ENCODE measurements at regions of chr1 and their contacts with region 1.

Region 1: GRCh38 chr1:179129702-179130473 is 48.0 kb downstream of the TOR3A start:
- DNase-seq: peak; percentile 31
- ATAC-seq: peak; percentile 97
- H3K4me3 Mint-ChIP-seq: peak overlapping the region; percentile 61
- H3K27ac Mint-ChIP-seq: peak overlapping the region; percentile 92
- H3K4me1 Mint-ChIP-seq: peaks cover 39% of the 10 kb centered on the region
- H3K27me3 Mint-ChIP-seq: no peaks in the 10 kb centered on the region

Region 2: DNA sequence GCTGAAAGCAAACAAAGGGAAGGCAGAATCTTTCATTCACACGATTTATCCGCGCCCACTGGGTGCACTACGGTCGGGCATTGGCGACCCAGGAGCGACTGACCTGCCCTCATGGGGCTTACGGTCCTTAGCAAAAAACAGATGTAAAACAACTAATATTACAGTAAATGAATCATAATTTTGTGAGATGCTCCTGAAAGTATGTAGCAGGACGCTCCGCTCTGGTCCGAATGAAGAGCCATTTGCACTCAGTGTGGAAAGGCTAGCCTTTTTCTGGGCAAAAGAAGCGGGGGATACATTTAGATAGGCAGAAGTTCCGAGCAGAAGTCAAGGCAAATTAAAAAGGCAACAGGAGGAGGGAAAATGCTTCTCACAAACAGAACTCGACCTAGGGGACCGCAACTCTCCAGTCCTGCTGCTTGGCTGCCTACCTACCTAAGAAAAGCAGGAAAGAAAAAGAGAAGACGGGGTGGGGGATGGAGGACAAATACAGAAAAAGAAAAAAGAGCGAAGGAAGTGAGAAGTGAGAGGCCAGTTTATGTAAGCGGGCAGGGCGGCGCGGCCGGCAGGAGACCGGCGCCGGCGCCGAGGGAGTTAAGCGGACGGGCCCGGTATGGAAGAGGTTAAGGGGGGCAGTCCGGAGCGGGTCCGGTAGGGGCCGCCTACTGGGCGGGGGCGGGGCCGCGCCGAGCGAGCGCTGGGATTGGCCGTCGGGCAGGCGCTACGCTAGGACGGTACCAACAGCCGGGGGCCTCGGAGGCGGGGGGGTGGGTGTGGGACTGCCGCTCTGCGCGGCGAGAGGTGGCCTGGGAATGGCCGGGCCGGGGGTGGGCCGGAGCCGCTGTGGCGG is 104.5 kb before region 1 on chr1 and contains the start of gene FAM20B:
- CTCF ChIA-PET with region 1: no interaction called
- POLR2A ChIA-PET with region 1: no interaction called
- intact Hi-C with region 1: loop called in 1 of 2 experiments (anchors 5 kb)
- DNase-seq: peak; percentile 93
- ATAC-seq: peak; percentile 85
- H3K4me3 Mint-ChIP-seq: peak within 1 kb of the TSS; percentile 87
- H3K27ac Mint-ChIP-seq: peak within 1 kb of the TSS; percentile 87
- H3K4me1 Mint-ChIP-seq: peaks cover 39% of the 10 kb centered on the region
- H3K27me3 Mint-ChIP-seq: no peaks in the 10 kb centered on the region
- total RNA-seq, gene FAM20B: 21.7 to 35.8 TPM

Region 3: GRCh38 chr1:179034720-179035119 is 95.2 kb before region 1 on chr1:
- CTCF ChIA-PET with region 1: no interaction called
- POLR2A ChIA-PET with region 1: no interaction called
- intact Hi-C with region 1: loop called (anchors 1 to 5 kb)
- DNase-seq: no peak
- ATAC-seq: peak; percentile 80
- H3K4me3 Mint-ChIP-seq: no peak overlapping the region
- H3K27ac Mint-ChIP-seq: peak overlapping the region; percentile 84
- H3K4me1 Mint-ChIP-seq: peaks cover 85% of the 10 kb centered on the region
- H3K27me3 Mint-ChIP-seq: no peaks in the 10 kb centered on the region

Region 4: DNA sequence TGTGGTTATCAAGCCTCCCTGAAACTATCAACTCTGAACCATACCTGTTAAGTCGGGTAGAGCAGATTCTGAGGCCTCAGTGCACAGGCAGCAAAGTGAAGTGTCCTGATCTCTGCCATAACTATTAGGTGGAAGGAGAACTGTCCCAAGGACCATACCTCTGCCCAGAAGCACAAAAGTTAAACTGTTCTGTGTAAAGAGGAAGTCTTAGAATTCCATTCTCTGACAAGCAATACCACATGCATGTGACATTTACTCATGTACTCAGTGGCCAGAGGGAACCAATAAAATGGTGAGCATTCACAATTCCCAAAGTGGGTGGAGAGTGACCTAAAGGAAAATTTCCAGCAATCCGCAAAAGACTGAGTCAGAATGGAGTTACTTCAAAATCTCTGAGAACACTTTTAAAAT is 13.0 kb after region 1 on chr1:
- CTCF ChIA-PET with region 1: interaction called, 5 read pairs
- POLR2A ChIA-PET with region 1: no interaction called
- intact Hi-C with region 1: loop called (anchors 1 kb)
- DNase-seq: no peak
- ATAC-seq: no peak
- H3K4me3 Mint-ChIP-seq: peak overlapping the region; percentile 38
- H3K27ac Mint-ChIP-seq: peak overlapping the region; percentile 75
- H3K4me1 Mint-ChIP-seq: peaks cover 40% of the 10 kb centered on the region
- H3K27me3 Mint-ChIP-seq: no peaks in the 10 kb centered on the region

Region 5: DNA sequence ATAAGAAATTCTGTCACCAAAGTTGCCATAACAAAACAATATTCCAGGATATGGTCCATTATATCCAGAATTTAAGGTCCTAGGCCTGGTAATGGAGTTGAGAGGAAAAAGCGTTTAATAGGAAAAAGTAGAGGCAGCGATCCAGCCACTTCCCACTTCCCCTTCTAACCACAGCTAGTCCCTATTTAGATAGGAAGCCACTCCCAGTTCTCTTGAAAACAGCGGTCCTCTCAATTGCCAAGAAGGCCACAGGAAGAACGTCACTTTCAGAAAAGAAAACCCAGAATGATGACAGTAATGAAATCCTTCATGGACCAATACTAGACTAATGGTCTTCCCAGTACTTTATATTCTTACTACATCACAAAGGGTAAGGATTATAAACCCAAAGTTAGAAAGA is 61.0 kb after region 1 on chr1:
- CTCF ChIA-PET with region 1: interaction called, 3 read pairs
- POLR2A ChIA-PET with region 1: no interaction called
- intact Hi-C with region 1: loop called in 1 of 2 experiments (anchors 2 kb)
- DNase-seq: no peak
- ATAC-seq: no peak
- H3K4me3 Mint-ChIP-seq: no peak overlapping the region
- H3K27ac Mint-ChIP-seq: peak overlapping the region; percentile 11
- H3K4me1 Mint-ChIP-seq: peaks cover 18% of the 10 kb centered on the region
- H3K27me3 Mint-ChIP-seq: no peaks in the 10 kb centered on the region

Region 6: DNA sequence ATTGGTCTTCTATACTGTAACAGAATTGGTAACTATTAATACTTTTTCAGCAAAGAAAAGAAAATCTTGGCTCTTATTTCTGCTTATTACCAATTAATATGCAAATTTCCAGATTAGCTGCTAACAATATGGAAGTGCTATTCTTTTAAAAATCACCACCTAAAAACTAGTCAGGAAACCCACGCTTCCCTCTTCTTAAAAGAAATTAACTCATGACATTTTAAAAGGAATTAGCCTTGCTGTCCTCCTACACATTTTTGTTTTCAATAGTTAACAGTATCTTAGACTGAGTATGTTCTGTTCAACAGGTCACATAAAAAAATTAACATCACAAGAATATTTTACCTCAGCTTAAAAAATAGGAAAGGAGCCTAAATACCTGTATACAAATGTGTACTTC is 72.3 kb after region 1 on chr1:
- CTCF ChIA-PET with region 1: no interaction called
- POLR2A ChIA-PET with region 1: no interaction called
- intact Hi-C with region 1: no loop called
- DNase-seq: no peak
- ATAC-seq: no peak
- H3K4me3 Mint-ChIP-seq: no peak overlapping the region
- H3K27ac Mint-ChIP-seq: no peak overlapping the region
- H3K4me1 Mint-ChIP-seq: peaks cover 33% of the 10 kb centered on the region
- H3K27me3 Mint-ChIP-seq: no peaks in the 10 kb centered on the region

Region 7: DNA sequence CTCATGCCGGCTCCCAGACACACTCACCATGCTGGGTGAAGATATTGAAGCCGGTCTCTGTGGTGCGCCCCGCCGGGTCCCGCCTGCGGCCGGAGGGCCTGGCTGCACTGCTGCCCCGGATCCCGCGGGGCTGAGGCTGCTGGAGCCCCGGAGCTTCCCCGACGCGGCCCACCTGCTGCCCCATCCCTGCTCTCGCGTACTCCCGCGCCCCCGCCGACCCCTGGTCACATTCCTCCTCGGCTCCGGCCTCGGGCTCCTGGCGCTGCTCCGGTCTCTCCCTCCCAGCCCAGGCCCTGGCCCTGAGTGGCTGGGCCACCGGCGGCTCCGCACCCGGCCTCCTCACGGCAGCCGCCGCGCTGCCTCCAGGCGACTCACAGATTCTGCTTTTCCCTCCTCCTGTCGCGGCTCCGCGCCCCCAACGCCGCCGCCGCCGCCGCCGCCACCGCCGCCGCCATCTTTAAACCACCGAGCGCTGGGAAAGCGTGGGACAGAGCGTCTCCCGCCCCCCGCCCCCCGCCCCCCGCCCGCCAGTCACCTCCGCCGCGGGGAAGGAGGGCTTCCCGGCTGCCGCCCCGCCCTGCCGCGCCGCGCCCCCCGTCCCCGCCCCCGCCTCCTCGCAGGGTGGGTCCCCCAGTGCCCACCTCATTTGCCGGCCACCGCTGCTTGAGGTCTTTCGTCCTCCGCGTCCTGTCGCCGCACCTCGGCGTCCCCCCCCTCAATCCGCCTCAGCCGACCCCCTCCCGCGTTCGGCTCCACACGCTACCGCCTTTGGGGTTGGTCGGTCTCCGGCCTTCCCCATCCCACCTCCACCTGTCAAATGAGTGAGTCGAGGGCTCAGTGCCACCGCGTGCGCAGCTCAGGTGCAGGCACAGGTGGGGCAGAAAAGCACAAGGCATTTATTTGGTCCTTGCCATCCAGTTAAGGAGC is 99.6 kb after region 1 on chr1 and contains the start of gene ABL2:
- CTCF ChIA-PET with region 1: no interaction called
- POLR2A ChIA-PET with region 1: no interaction called
- intact Hi-C with region 1: loop called (anchors 1 to 2 kb)
- DNase-seq: peak; percentile 71
- ATAC-seq: peak; percentile 21
- H3K4me3 Mint-ChIP-seq: peak within 1 kb of the TSS; percentile 86
- H3K27ac Mint-ChIP-seq: peak within 1 kb of the TSS; percentile 88
- H3K4me1 Mint-ChIP-seq: peaks cover 36% of the 10 kb centered on the region
- H3K27me3 Mint-ChIP-seq: no peaks in the 10 kb centered on the region
- total RNA-seq, gene ABL2: 6.6 to 8.4 TPM

Measured in activated CD4-positive, alpha-beta T cell treated with anti-CD3 and anti-CD28 coated beads for 36 hours (primary cell).